Naive thymus-derived CD8-positive, alpha-beta T cell (primary cell): ENCODE measurements at regions of chr4 and their contacts with region 1.

Region 1: GRCh38 chr4:87390891-87391575 is at the start of gene HSD17B11:
- DNase-seq: peak; percentile 60 to 91 (median 79)
- ATAC-seq: peak; percentile 97 to 98
- H3K4me3 Mint-ChIP-seq: peak within 1 kb of the TSS; percentile 92 to 99 (median 96)
- H3K27ac Mint-ChIP-seq: peak within 1 kb of the TSS; percentile 94 to 98 (median 97)
- H3K4me1 Mint-ChIP-seq: peaks cover 23 to 53% (median 51%) of the 10 kb centered on the region in 4 donors
- H3K27me3 Mint-ChIP-seq: no peaks in the 10 kb centered on the region
- polyA plus RNA-seq, gene HSD17B11: 68.0 to 125 (median 97.0) TPM

Region 2: GRCh38 chr4:87406462-87406861 is 15.4 kb after region 1 on chr4:
- POLR2A ChIA-PET with region 1: interaction called, 12 read pairs
- DNase-seq: peak in 3 of 10 donors; percentile 7 to 31 (median 19)
- ATAC-seq: peak; percentile 68 to 73
- H3K4me3 Mint-ChIP-seq: peak overlapping the region; percentile 11 to 79 (median 76)
- H3K27ac Mint-ChIP-seq: peak overlapping the region; percentile 61 to 95 (median 90)
- H3K4me1 Mint-ChIP-seq: peaks cover 10 to 23% (median 22%) of the 10 kb centered on the region in 4 donors
- H3K27me3 Mint-ChIP-seq: peaks cover 9 to 20% (median 12%) of the 10 kb centered on the region in 5 donors

Region 3: GRCh38 chr4:87422104-87423052 is 31.3 kb after region 1 on chr4 and contains the start of gene NUDT9:
- POLR2A ChIA-PET with region 1: interaction called, 60 read pairs
- DNase-seq: peak; percentile 79 to 98 (median 86)
- ATAC-seq: peak; percentile 87 to 88
- H3K4me3 Mint-ChIP-seq: peak within 1 kb of the TSS; percentile 84 to 100 (median 99)
- H3K27ac Mint-ChIP-seq: peak within 1 kb of the TSS; percentile 98 to 100 (median 100)
- H3K4me1 Mint-ChIP-seq: peaks cover 3 to 46% (median 38%) of the 10 kb centered on the region in 4 donors
- H3K27me3 Mint-ChIP-seq: peaks cover 0 to 2% (median 0%) of the 10 kb centered on the region in 5 donors
- polyA plus RNA-seq, gene NUDT9: 23.3 to 28.1 (median 26.9) TPM